ENCODE measurements at regions of chr10 and their contacts with region 1.

Region 1: GRCh38 chr10:62437696-62438095 is 63.5 kb downstream of the ZNF365 start:
- DNase-seq: peak; percentile 37
- ATAC-seq: peak; percentile 71
- H3K4me3 Mint-ChIP-seq: no peak overlapping the region
- H3K27ac Mint-ChIP-seq: no peak overlapping the region
- H3K4me1 Mint-ChIP-seq: peaks cover 8% of the 10 kb centered on the region
- H3K27me3 Mint-ChIP-seq: peaks cover 13% of the 10 kb centered on the region

Region 2: DNA sequence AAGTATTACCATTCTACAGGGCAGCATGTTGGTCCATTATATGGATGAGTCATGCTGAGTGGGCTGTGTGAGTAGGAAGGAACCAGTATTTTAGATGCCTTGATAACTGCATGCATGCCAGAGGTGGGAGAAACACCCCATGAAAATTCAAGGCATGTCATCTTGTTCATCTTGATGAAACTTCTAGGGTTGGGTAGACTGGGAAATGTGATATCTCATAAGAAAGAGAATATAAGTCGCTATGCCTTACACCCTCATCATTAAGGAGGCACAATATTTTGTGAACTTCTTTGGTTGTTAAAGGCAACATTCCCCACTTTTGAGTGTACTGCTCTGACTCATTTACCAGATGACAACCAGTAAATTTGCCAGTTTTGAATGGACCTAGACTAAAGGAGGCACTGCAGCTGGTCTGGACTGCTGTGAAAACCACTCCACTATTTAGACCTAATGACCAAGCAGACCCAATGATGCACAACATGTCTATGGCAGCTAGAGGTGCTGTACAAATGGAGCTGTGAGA is 15.6 kb before region 1 on chr10:
- CTCF ChIA-PET with region 1: interaction called, 10 read pairs
- POLR2A ChIA-PET with region 1: no interaction called
- DNase-seq: no peak
- ATAC-seq: no peak
- H3K4me3 Mint-ChIP-seq: no peak overlapping the region
- H3K27ac Mint-ChIP-seq: no peak overlapping the region
- H3K4me1 Mint-ChIP-seq: no peaks in the 10 kb centered on the region
- H3K27me3 Mint-ChIP-seq: peaks cover 4% of the 10 kb centered on the region

Region 3: GRCh38 chr10:62451611-62451975 is 13.9 kb after region 1 on chr10:
- CTCF ChIA-PET with region 1: interaction called, 29 read pairs
- POLR2A ChIA-PET with region 1: no interaction called
- DNase-seq: no peak
- ATAC-seq: no peak
- H3K4me3 Mint-ChIP-seq: no peak overlapping the region
- H3K27ac Mint-ChIP-seq: no peak overlapping the region
- H3K4me1 Mint-ChIP-seq: peaks cover 5% of the 10 kb centered on the region
- H3K27me3 Mint-ChIP-seq: peaks cover 14% of the 10 kb centered on the region

Measured in activated CD8-positive, alpha-beta T cell treated with anti-CD3 and anti-CD28 coated beads, Interleukin-2, amount 10 ng/mL, durations not matched to agents 7 days and 5 days (primary cell).